Psoas muscle (tissue), 8 donors: ENCODE measurements at regions of chr4 and their contacts with region 1.

Region 1: GRCh38 chr4:23945451-23946017 is 55.7 kb upstream of the PPARGC1A start:
- DNase-seq: peak; percentile 62 to 75
- ATAC-seq: peak; percentile 85 to 92 (median 90)
- H3K4me3 ChIP-seq: no peak overlapping the region
- H3K27ac ChIP-seq: peak overlapping the region; percentile 61
- H3K4me1 ChIP-seq: peaks cover 9% of the 10 kb centered on the region
- H3K27me3 ChIP-seq: no peaks in the 10 kb centered on the region
- CTCF ChIP-seq: no peak

Region 2: DNA sequence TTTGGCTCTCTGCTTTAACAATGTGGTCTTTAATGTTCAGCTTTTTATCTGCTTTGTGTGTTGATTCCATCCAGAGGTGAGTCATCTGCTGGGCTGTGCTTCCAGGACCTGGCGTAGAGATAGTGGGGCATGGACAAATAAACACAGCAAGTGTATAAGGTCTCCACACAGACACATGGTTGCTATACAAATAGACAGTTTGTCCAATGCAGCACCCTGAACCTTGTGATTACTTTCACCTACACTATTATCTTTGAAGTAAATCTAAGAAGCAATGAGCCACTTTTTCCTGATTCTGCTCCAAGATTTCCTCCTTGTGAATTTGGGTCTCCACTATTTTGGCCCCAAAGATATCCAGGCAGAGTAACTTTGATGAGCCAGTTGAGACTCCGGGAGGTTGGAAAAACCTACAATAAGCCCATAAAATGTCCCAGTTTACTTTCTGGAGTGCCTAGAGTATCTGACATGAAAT is 67.7 kb before region 1 on chr4:
- intact Hi-C with region 1: loop called in 1 of 2 experiments (anchors 5 kb)
- DNase-seq: no peak
- ATAC-seq: peak; percentile 44 to 66 (median 45)
- H3K4me3 ChIP-seq: peak overlapping the region; percentile 8
- H3K27ac ChIP-seq: peak overlapping the region; percentile 95
- H3K4me1 ChIP-seq: peaks cover 77% of the 10 kb centered on the region
- H3K27me3 ChIP-seq: no peaks in the 10 kb centered on the region
- CTCF ChIP-seq: no peak

Region 3: DNA sequence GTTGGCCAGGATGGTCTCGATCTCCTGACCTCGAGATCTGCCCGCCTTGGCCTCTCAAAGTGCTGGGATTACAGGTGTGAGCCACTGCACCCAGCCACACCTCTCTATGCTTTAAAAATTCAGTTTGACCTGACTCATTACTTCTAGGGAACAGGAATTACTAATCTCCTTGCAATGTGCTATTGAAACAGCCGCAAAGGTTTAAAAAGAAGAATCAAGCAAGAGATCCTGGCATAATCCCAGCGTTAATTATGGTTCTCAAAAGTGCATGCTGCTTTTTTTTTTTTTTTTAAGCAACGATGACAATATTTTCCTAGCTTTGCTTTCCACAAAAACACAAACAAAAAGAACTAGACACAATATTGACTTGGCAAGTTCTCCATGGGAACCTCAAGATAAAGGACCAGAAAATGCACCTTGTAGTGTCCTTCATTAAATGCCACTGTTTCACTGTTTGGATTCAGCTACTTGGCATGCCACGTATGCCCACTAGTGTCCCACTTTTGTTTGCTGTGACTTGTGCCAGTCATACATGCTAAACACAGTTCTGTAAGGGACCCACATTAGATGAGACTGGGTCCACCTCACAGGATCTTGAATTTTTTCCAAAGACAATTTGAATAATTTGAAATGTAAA is 56.9 kb after region 1 on chr4:
- intact Hi-C with region 1: no loop called
- DNase-seq: no peak
- ATAC-seq: no peak
- H3K4me3 ChIP-seq: no peak overlapping the region
- H3K27ac ChIP-seq: no peak overlapping the region
- H3K4me1 ChIP-seq: no peaks in the 10 kb centered on the region
- H3K27me3 ChIP-seq: no peaks in the 10 kb centered on the region
- CTCF ChIP-seq: no peak

Region 4: GRCh38 chr4:24076811-24077210 is 131.3 kb after region 1 on chr4:
- intact Hi-C with region 1: no loop called
- DNase-seq: no peak
- ATAC-seq: no peak
- H3K4me3 ChIP-seq: no peak overlapping the region
- H3K27ac ChIP-seq: no peak overlapping the region
- H3K4me1 ChIP-seq: no peaks in the 10 kb centered on the region
- H3K27me3 ChIP-seq: no peaks in the 10 kb centered on the region
- CTCF ChIP-seq: no peak